Heart left ventricle (tissue), 16 donors: ENCODE measurements at regions of chr18 and their contacts with region 1.

Region 1: DNA sequence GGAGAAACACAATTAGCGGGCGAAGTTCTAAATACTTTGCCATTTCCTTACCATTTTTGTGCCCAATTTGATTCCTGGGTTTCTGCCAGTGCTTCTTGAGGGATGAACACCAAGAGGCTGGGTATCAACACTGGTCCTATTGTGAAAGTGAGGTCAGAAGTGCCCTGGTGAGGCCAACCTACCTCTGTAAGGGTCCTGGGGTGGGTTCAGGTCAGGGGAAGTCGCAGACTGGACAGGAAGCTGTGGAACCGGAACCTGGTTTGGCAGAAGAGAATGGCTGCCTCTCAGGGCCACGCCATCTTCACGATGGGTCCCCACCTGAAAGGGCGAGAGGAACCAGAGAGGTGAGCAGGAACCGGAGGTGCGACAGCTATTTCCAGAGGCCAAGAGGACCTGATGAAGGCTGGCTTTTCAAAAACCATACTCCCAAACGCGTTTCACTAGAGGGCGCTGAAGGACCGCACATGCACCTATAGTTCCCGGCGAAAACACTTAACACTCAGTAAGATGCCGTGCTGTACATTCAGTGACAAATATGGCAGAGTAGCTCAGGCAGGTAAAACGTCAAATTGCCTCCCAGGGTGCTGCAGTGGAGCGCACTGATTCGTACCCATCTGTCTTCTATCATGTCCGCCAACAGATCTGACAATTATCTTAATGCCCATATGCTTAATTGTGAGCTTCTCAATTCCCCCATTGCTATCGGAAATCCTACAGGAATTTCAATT is 275.3 kb upstream of the CCDC68 start:
- DNase-seq: peak; percentile 67 to 79 (median 75)
- ATAC-seq: peak; percentile 76 to 92 (median 88)
- H3K4me3 ChIP-seq: no peak overlapping the region
- H3K27ac ChIP-seq: peak overlapping the region in 11 of 12 donors; percentile 47 to 77 (median 62)
- H3K4me1 ChIP-seq: peaks cover 0 to 55% (median 37%) of the 10 kb centered on the region in 12 donors
- H3K27me3 ChIP-seq: no peaks in the 10 kb centered on the region
- CTCF ChIP-seq: peak; percentile 60 to 87 (median 79)
- POLR2A ChIP-seq: no peak

Region 2: GRCh38 chr18:55343396-55344073 is 109.0 kb after region 1 on chr18:
- intact Hi-C with region 1: loop called in 1 of 10 experiments (anchors 5 kb)
- DNase-seq: no peak
- ATAC-seq: peak in 3 of 4 donors; percentile 56 to 64 (median 57)
- H3K4me3 ChIP-seq: no peak overlapping the region
- H3K27ac ChIP-seq: peak overlapping the region in 2 of 12 donors; percentile 4 to 21
- H3K4me1 ChIP-seq: peaks cover 0 to 61% (median 17%) of the 10 kb centered on the region in 12 donors
- H3K27me3 ChIP-seq: no peaks in the 10 kb centered on the region
- CTCF ChIP-seq: peak; percentile 38 to 74 (median 58)
- POLR2A ChIP-seq: no peak

Region 3: GRCh38 chr18:55415258-55415871 is 180.8 kb after region 1 on chr18:
- intact Hi-C with region 1: loop called in 5 of 10 experiments (anchors 5 to 10 kb)
- DNase-seq: peak; percentile 85 to 92 (median 88)
- ATAC-seq: peak; percentile 85 to 93 (median 88)
- H3K4me3 ChIP-seq: no peak overlapping the region
- H3K27ac ChIP-seq: peak overlapping the region in 7 of 12 donors; percentile 1 to 58 (median 21)
- H3K4me1 ChIP-seq: peaks cover 0 to 67% (median 27%) of the 10 kb centered on the region in 12 donors
- H3K27me3 ChIP-seq: no peaks in the 10 kb centered on the region
- CTCF ChIP-seq: peak; percentile 83 to 97 (median 94)
- POLR2A ChIP-seq: no peak

Region 4: DNA sequence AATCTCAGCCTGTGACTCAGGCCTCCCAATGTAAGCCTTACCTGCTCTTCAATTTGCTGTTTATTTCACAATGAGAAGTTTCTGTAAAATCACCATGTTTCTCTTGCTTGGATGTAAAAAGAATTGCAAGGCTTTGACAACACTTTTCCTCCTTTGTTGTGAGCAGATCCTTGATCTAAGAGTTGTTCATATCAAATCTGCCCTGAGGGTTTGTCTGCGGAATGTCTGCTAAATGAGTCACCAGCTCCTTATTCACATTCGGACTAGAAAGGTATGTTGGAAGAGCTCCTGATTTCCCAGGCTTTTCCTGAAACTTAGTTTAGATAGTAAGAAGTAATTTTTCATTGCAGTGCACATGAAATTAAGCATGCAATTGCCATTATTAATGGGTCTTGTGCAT is 621.7 kb after region 1 on chr18:
- intact Hi-C with region 1: loop called in 6 of 10 experiments (anchors 5 to 10 kb)
- DNase-seq: no peak
- ATAC-seq: no peak
- H3K4me3 ChIP-seq: no peak overlapping the region
- H3K27ac ChIP-seq: no peak overlapping the region
- H3K4me1 ChIP-seq: peaks cover 0 to 5% (median 0%) of the 10 kb centered on the region in 12 donors
- H3K27me3 ChIP-seq: no peaks in the 10 kb centered on the region
- CTCF ChIP-seq: no peak
- POLR2A ChIP-seq: no peak

Region 5: DNA sequence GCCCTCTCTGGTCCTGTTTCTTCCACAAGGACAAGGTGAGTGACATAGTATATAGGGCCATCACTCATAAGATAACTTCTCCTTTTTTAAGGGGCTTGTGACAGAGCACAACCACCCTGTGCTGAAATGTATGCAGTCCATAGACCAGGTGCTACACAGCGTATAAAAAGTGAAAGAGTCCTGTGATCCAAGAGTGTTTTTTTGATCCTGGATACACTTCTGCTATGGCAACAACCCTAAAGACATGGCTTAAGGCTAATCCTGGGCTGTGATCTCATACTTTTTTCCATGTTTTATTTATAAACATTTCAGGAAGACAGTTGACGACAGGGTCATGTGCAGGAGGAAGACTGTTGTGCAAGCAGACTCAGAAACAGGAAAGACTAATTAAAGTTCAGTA is 754.0 kb after region 1 on chr18:
- intact Hi-C with region 1: loop called in 1 of 10 experiments (anchors 10 kb)
- DNase-seq: peak in 4 of 5 donors; percentile 36 to 70 (median 46)
- ATAC-seq: peak; percentile 94 to 98 (median 96)
- H3K4me3 ChIP-seq: no peak overlapping the region
- H3K27ac ChIP-seq: peak overlapping the region; percentile 11 to 90 (median 71)
- H3K4me1 ChIP-seq: peaks cover 0 to 14% (median 2%) of the 10 kb centered on the region in 12 donors
- H3K27me3 ChIP-seq: no peaks in the 10 kb centered on the region
- CTCF ChIP-seq: no peak
- POLR2A ChIP-seq: no peak

Region 6: DNA sequence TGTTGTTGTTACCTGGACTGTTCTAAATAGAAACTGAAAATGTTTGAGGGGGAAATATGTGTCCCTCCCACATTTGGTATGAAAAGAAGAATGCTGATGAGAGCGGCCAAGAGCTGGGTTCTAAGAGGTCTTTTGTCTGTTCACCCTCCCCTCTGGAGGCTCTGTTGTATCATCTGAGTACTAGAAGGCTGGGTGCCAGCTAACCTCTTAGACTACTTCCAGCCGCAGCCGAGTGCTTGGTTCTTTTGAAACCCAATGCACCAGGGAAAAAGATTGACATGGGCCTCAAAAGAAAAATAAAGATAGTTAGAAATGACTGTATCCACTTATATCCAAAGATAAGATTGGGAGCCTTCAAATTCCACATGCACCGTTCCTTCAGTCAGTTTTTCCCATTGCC is 1148.0 kb after region 1 on chr18:
- intact Hi-C with region 1: loop called in 1 of 10 experiments (anchors 10 kb)
- DNase-seq: peak in 3 of 5 donors; percentile 24 to 39 (median 34)
- ATAC-seq: peak; percentile 44 to 77 (median 50)
- H3K4me3 ChIP-seq: no peak overlapping the region
- H3K27ac ChIP-seq: no peak overlapping the region
- H3K4me1 ChIP-seq: peaks cover 0 to 9% (median 1%) of the 10 kb centered on the region in 12 donors
- H3K27me3 ChIP-seq: no peaks in the 10 kb centered on the region
- CTCF ChIP-seq: no peak
- POLR2A ChIP-seq: no peak